B cell (primary cell): ENCODE measurements at regions of chr7 and their contacts with region 1.

Region 1: GRCh38 chr7:2863461-2864066 is 19.5 kb upstream of the GNA12 start:
- DNase-seq: peak; percentile 45
- ATAC-seq: peak; percentile 83
- H3K4me3 ChIP-seq: peak overlapping the region in 1 of 5 experiments; percentile 13
- H3K4me3 Mint-ChIP-seq: peak overlapping the region; percentile 73
- H3K27ac ChIP-seq: peak overlapping the region; percentile 24 to 37
- H3K27ac Mint-ChIP-seq: peak overlapping the region; percentile 84
- H3K4me1 ChIP-seq: peaks cover 13 to 28% of the 10 kb centered on the region in 2 donors
- H3K4me1 Mint-ChIP-seq: peaks cover 24% of the 10 kb centered on the region
- H3K27me3 ChIP-seq: no peaks in the 10 kb centered on the region
- H3K27me3 Mint-ChIP-seq: no peaks in the 10 kb centered on the region
- CTCF ChIP-seq: no peak

Region 2: DNA sequence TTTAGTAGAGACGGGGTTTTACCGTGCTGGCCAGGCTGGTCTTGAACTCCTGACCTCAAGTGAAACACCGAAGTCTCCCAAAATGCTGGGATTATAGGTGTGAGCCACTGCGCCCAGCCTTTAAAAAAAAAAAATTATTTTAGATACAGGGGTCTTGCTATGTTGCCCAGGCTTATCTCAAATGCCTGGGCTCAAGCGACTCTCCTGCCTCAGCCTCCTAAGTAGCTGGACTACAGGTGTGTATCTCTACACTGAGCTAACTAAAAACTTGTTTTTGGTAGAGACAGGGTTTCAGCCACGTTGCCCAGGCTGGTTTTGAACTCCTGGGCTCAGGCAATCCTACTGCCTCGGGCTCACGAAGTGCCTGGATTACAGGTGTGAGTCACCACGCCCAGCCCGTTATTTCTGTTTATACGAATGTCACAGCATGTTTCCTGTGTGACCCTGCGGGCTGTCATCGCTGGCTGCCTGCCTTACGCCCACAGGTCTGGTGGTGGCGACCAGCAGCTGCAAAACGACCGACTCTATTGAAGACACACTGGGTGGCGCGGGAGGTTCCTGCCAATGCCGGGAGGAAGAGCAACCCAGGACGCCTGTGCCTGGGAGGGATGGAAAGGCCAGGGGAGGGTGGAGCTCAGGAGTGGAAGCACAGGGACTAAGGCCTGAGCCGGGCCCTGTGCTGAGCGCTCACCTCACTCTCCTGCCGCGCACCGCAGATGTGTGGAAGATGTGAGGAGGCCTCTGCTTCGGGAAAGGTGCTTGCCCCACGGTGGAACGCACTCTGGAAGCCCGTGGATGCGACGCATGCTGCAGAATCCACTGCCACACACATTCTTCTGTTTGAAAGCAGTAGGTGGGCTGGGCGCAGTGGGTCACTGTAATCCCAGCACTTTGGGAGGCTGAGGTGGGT is 142.7 kb before region 1 on chr7:
- CTCF ChIA-PET with region 1: interaction called, 15 read pairs
- POLR2A ChIA-PET with region 1: interaction called, 5 read pairs
- intact Hi-C with region 1: no loop called
- DNase-seq: peak; percentile 84
- ATAC-seq: peak; percentile 80
- H3K4me3 ChIP-seq: no peak overlapping the region
- H3K4me3 Mint-ChIP-seq: peak overlapping the region; percentile 31
- H3K27ac ChIP-seq: peak overlapping the region; percentile 19 to 50
- H3K27ac Mint-ChIP-seq: peak overlapping the region; percentile 80
- H3K4me1 ChIP-seq: peaks cover 42 to 57% of the 10 kb centered on the region in 2 donors
- H3K4me1 Mint-ChIP-seq: peaks cover 60% of the 10 kb centered on the region
- H3K27me3 ChIP-seq: no peaks in the 10 kb centered on the region
- H3K27me3 Mint-ChIP-seq: no peaks in the 10 kb centered on the region
- CTCF ChIP-seq: no peak

Region 3: DNA sequence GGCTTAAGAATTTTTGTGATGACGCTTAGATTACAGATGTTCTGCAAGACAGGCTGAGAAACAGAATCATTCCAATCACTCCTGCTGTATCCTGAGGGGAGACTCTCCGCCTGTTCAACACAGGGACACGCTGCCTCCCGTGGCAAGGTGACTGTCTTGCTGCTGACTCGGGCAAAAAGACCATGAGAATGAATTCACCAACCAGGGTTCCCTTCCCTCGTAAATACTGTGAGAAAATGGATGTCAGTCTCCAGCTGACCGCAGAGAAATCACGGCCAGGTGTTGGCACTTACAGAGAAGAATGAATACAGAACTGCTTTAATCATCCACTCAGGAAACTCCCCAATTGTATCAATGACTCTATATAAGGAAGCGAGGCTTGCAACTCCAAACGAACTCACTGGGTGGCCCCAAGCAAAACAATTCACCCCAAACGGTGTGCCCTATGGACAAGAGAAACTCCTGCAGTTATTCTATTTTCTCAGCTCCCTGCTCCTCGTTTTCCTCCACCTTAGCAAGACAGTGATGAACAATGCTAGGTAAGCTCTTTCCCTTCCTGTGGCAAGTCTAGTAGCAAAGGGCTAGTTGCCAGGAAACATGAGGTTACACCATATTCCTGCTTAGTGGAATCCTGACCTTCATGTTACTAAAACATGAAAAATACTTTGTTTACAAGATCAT is 42.3 kb before region 1 on chr7:
- CTCF ChIA-PET with region 1: interaction called, 16 read pairs
- POLR2A ChIA-PET with region 1: no interaction called
- intact Hi-C with region 1: no loop called
- DNase-seq: peak; percentile 78
- ATAC-seq: peak; percentile 60
- H3K4me3 ChIP-seq: peak overlapping the region in 2 of 5 experiments; percentile 16 to 21
- H3K4me3 Mint-ChIP-seq: peak overlapping the region; percentile 86
- H3K27ac ChIP-seq: peak overlapping the region; percentile 52 to 68
- H3K27ac Mint-ChIP-seq: peak overlapping the region; percentile 87
- H3K4me1 ChIP-seq: peaks cover 49 to 54% of the 10 kb centered on the region in 2 donors
- H3K4me1 Mint-ChIP-seq: peaks cover 72% of the 10 kb centered on the region
- H3K27me3 ChIP-seq: no peaks in the 10 kb centered on the region
- H3K27me3 Mint-ChIP-seq: no peaks in the 10 kb centered on the region
- CTCF ChIP-seq: no peak

Region 4: DNA sequence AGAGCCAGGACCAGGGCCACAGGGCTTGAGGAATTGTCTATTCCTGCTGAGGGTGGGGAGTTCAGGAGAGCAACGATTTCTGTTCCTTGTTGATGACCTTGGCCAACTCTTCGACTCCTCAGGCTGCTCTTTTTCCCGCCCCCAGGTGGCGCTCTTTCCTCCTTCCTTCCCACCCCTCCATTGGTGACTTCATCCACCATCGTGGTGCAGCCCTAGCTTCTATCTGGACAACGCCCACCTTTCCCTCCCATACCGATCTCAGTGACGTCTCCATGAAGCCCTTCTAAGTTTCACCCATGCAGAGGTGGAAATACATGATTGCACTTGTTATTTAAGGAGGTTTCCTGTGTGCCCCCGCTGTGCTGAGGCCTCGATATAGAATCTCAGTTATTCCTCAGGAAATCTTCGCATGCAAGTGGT is 202.2 kb after region 1 on chr7:
- CTCF ChIA-PET with region 1: interaction called, 6 read pairs
- POLR2A ChIA-PET with region 1: no interaction called
- intact Hi-C with region 1: loop called (anchors 10 kb)
- DNase-seq: peak; percentile 82
- ATAC-seq: peak; percentile 39
- H3K4me3 ChIP-seq: no peak overlapping the region
- H3K4me3 Mint-ChIP-seq: peak overlapping the region; percentile 47
- H3K27ac ChIP-seq: peak overlapping the region in 1 of 2 donors; percentile 15
- H3K27ac Mint-ChIP-seq: peak overlapping the region; percentile 83
- H3K4me1 ChIP-seq: peaks cover 57 to 62% of the 10 kb centered on the region in 2 donors
- H3K4me1 Mint-ChIP-seq: peaks cover 69% of the 10 kb centered on the region
- H3K27me3 ChIP-seq: no peaks in the 10 kb centered on the region
- H3K27me3 Mint-ChIP-seq: no peaks in the 10 kb centered on the region
- CTCF ChIP-seq: peak; percentile 74

Region 5: DNA sequence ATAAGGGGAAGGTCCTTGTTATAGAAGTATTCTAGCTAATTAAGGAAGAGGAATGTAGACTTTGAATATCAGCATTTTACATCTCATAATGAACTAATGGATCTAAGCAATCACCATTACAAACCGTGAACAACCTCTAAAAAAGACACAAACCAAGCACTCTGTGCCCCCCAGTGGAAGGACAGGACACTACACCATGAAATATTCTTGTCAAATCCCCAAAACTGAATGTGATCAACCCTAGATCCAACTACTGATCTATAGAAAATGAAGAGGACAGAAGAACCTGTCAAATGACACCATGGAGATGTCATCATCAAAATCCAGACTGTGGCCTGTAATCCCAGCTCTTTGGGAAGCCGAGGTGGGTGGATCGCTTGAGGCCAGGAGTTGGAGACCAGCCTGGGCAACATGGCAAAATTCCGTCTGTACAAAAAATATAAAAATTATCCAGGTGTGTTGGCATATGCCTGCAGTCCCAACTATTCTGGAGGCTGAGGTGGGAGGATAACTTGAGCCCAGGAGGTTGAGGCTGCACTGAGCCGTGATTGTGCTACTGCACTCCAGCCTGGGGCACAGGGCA is 291.4 kb after region 1 on chr7:
- CTCF ChIA-PET with region 1: interaction called, 57 read pairs
- POLR2A ChIA-PET with region 1: no interaction called
- intact Hi-C with region 1: loop called (anchors 1 kb)
- DNase-seq: peak; percentile 78
- ATAC-seq: peak; percentile 72
- H3K4me3 ChIP-seq: no peak overlapping the region
- H3K4me3 Mint-ChIP-seq: no peak overlapping the region
- H3K27ac ChIP-seq: no peak overlapping the region
- H3K27ac Mint-ChIP-seq: no peak overlapping the region
- H3K4me1 ChIP-seq: peaks cover 22 to 30% of the 10 kb centered on the region in 2 donors
- H3K4me1 Mint-ChIP-seq: peaks cover 33% of the 10 kb centered on the region
- H3K27me3 ChIP-seq: no peaks in the 10 kb centered on the region
- H3K27me3 Mint-ChIP-seq: peaks cover 8% of the 10 kb centered on the region
- CTCF ChIP-seq: peak; percentile 88

Region 6: DNA sequence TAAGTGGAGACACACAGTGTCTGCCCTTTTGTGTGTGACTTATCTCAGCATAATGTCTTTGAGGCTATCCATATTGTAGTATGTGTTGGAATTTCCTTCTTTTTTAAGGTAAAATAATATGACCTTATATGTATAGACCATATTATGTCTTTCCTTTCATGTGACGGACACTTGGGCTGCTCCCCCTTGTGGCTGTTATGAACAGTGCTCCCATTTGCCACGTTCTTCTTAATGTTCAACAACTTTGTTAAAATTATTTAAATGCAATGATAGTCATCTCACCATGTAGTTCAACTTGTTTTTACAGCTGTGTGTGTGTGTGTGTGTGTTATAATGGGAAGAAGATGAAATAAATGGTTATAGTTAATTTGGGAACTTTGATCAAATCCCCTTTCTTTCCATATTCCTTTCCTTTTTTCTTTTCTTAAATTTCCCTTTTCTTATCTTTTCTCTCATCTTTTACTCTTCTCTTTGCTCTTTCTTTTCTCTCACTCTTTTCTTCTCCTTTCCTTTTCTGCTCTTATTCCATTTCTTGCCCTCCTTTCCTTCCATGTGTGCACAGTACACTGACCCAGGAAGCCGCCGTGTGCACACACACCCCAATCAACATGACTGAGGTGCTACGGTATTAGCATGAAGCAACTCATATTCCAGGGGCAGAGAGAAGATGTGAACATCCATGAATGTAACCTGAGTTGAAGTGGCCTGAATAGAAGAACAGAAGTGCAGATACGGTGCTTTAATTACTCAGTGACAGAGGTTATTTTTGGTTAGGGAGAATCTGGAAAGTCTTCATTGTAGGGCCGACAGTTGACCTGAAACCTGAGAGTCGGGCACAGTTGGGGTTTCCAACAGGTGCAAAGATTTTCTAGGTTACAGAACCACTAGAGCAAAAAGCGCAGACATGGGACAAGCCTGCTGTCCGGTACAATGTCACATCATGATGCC is 1034.1 kb after region 1 on chr7:
- CTCF ChIA-PET with region 1: interaction called, 26 read pairs
- POLR2A ChIA-PET with region 1: no interaction called
- intact Hi-C with region 1: no loop called
- DNase-seq: peak; percentile 71
- ATAC-seq: peak; percentile 62
- H3K4me3 ChIP-seq: no peak overlapping the region
- H3K4me3 Mint-ChIP-seq: no peak overlapping the region
- H3K27ac ChIP-seq: no peak overlapping the region
- H3K27ac Mint-ChIP-seq: no peak overlapping the region
- H3K4me1 ChIP-seq: no peaks in the 10 kb centered on the region
- H3K4me1 Mint-ChIP-seq: no peaks in the 10 kb centered on the region
- H3K27me3 ChIP-seq: peaks cover 0 to 3% (median 1%) of the 10 kb centered on the region in 4 experiments
- H3K27me3 Mint-ChIP-seq: peaks cover 20% of the 10 kb centered on the region
- CTCF ChIP-seq: peak; percentile 91